A549 (cell line): ENCODE measurements at regions of chr7 and their contacts with region 1.

Region 1: DNA sequence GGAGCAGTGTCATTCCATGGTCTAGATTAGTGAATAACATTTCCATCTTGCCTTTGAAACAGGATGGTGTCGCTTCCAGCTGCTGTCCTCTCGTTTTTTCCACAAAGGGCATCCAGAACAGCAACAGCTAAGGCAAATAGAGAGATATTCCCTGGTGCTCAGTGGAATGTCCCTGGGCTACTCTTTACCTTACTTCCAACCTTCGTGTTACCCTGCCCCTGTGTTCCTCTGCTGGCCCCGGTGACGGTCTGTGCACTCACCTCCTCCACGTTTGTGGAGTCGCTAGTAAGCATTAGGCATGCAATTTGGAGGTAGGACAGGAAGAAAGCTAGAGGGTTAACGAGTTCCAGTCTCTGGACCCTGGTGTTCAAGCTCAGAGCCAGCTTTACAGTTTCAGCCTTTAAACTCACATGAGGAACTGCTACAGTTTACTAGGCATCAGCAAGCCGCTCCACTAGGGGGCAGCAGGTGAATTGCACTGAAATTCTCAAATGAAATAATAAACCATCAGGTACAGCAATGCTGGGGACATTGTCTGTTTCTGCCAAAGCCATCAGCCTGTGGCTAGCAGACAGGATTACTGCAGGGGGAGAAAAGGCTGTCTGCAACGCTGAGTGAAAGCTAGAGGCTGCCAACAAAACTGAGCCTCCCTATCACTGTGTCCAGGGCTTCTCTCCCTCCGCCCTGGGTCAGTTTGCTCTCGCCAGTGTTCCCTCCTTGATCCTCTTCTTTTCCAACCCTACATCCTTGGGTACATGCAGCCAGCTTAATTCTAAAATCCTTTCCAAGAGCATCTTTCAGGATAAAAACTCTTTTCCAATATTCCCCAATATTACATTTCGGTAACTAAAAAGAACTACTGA is 9.0 kb downstream of the MRPL32 start:
- DNase-seq: peak; percentile 69 to 70
- ATAC-seq: peak; percentile 88 to 93
- H3K4me3 ChIP-seq: no peak overlapping the region
- H3K27ac ChIP-seq: no peak overlapping the region
- H3K4me1 ChIP-seq: no peaks in the 10 kb centered on the region
- CTCF ChIP-seq: peak; percentile 94
- EP300 ChIP-seq: no peak
- POLR2A ChIP-seq: no peak
- RAD21 ChIP-seq: peak; percentile 89 to 91

Region 2: DNA sequence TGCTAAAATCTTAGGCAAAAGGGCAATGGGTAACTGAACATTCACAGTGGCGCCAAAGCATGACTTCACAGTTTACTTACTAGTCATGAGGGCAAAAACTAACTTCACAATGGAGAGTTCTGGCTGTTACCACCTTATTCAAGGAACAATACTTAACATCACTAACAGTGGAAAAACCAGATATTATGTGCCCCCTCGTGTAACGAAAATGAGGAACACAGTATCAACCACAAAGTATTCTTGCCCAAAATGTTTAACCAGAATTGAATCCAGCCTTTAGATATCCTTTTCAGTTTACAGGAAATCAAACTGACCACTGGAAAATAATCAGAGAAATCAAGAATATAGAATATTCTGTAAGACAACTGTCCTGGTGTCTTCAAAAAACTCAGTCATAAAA is 38.9 kb before region 1 on chr7:
- CTCF ChIA-PET with region 1: no interaction called
- POLR2A ChIA-PET with region 1: no interaction called
- DNase-seq: no peak
- ATAC-seq: no peak
- H3K4me3 ChIP-seq: no peak overlapping the region
- H3K27ac ChIP-seq: no peak overlapping the region
- H3K4me1 ChIP-seq: no peaks in the 10 kb centered on the region
- CTCF ChIP-seq: no peak
- EP300 ChIP-seq: no peak
- POLR2A ChIP-seq: no peak
- RAD21 ChIP-seq: no peak

Region 3: DNA sequence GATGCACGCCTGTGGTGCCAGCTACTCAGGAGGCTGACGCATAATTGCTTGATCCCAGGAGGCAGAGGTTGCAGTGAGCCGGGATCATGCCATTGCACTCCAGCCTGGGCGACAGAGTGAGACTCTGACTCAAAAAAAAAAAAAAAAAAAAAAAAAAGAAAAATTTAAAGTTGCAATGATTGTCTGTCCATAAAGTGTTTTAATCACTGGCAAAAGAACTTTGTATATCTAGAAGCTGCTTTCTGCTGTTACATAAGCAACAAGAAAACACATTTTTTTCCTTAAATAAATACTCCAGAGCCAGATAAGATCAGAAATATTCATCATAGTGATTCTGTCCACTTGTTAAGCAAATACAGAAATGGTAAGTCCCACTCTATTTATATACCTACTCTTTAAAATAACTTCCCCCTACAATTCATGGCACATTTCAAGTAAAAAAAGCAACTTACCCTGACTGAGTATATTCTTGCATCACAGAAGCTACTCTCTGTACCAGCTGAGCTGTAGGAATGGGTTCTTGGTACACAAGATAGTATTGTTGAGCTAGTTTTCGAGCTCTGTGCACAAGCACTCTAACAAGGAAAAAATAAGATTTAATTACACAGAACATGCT is 16.9 kb before region 1 on chr7:
- CTCF ChIA-PET with region 1: interaction called, 53 read pairs
- POLR2A ChIA-PET with region 1: no interaction called
- DNase-seq: no peak
- ATAC-seq: no peak
- H3K4me3 ChIP-seq: no peak overlapping the region
- H3K27ac ChIP-seq: no peak overlapping the region
- H3K4me1 ChIP-seq: peaks cover under 1% of the 10 kb centered on the region; the same call in 1 of the 3 replicates
- CTCF ChIP-seq: no peak
- EP300 ChIP-seq: no peak
- POLR2A ChIP-seq: no peak
- RAD21 ChIP-seq: no peak

Region 4: GRCh38 chr7:42964849-42965805 is 23.9 kb after region 1 on chr7:
- CTCF ChIA-PET with region 1: interaction called, 13 read pairs
- POLR2A ChIA-PET with region 1: no interaction called
- DNase-seq: no peak
- ATAC-seq: no peak
- H3K4me3 ChIP-seq: no peak overlapping the region
- H3K27ac ChIP-seq: no peak overlapping the region
- H3K4me1 ChIP-seq: no peaks in the 10 kb centered on the region
- CTCF ChIP-seq: no peak
- EP300 ChIP-seq: no peak
- POLR2A ChIP-seq: no peak
- RAD21 ChIP-seq: no peak

Region 5: GRCh38 chr7:43108255-43109011 is 167.2 kb after region 1 on chr7:
- CTCF ChIA-PET with region 1: interaction called, 13 read pairs
- POLR2A ChIA-PET with region 1: no interaction called
- DNase-seq: peak; percentile 58
- ATAC-seq: peak; percentile 88 to 95
- H3K4me3 ChIP-seq: no peak overlapping the region
- H3K27ac ChIP-seq: no peak overlapping the region
- H3K4me1 ChIP-seq: peaks cover 11% of the 10 kb centered on the region; the same call in 1 of the 3 replicates
- CTCF ChIP-seq: peak; percentile 61
- EP300 ChIP-seq: no peak
- POLR2A ChIP-seq: no peak
- RAD21 ChIP-seq: peak; percentile 55 to 65; a peak in 4 of 5 replicates

Region 6: DNA sequence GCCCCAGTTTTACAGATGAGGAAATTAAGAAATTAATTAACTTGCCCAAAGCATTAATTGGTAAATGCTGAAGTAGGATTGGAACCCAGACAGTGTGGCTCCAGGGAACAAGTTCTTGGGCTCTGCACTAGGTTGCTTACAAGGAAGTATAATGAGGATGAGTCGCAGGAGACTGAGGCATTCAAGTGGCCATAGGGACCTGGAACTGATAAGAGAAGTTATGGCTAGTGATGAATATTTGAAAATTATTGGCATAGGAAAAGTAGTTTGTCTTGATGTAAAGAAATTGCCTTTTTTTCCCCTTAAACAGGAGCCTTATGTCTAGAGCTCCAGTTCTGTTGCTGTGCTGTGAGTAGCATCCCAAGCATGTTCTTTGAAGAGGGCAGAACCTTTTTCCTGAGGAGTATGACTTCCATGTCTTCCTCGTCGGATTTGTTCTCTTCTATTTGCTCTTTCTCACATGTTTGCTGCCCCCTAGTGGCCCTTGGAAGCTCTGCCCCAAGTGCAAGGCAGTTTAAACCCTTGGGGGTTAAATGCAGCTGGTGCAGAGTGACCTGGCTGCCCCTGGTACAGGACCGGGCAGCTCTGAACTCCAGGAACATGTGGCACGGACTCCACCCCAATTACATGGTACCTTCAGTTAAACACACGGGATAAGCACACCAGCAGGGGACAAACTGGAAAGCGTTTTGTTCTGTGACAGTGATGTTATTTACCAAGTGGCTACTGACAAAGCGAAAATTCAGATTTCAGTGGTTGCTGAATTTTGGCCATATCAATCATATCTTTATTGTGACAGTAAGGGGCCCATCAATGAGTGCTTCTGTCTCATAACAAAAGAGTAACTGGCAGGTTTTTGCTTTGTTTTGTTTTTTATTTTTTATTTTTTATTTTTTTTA is 320.0 kb after region 1 on chr7:
- CTCF ChIA-PET with region 1: interaction called, 36 read pairs
- POLR2A ChIA-PET with region 1: no interaction called
- DNase-seq: peak; percentile 51 to 89
- ATAC-seq: peak; percentile 93 to 98
- H3K4me3 ChIP-seq: no peak overlapping the region
- H3K27ac ChIP-seq: no peak overlapping the region
- H3K4me1 ChIP-seq: no peaks in the 10 kb centered on the region
- CTCF ChIP-seq: peak; percentile 84
- EP300 ChIP-seq: no peak
- POLR2A ChIP-seq: no peak
- RAD21 ChIP-seq: peak; percentile 84 to 90

Region 7: DNA sequence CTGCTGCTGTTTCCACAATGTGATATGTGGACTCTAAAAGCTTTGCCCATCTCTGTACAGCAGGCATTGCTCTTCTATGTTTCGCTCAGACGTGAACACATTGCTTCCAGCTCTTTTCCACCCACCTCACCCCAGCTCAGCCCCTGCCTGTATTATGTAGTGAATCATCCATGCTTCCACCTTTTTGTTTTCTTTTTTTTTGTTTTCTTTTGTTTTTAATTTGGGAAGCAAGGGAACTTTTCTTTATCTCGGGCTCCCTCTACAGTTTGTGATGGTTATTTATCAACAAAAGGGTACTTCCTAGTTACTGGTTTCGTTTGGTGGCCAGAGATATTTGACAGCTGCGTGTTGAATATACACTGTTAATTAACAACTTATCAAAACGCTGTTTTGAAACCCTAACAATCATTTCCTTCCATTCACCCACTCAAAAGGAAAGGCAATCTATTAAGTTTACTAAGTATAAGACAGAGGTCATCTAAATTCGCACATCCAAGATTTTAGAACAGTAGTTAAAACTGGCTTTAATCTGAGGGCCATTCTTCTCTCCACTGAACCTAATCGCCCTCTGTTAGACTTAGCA is 513.8 kb after region 1 on chr7:
- CTCF ChIA-PET with region 1: interaction called, 21 read pairs
- POLR2A ChIA-PET with region 1: no interaction called
- DNase-seq: peak; percentile 22 to 38
- ATAC-seq: peak; percentile 56 to 63; a peak in 4 of 6 replicates
- H3K4me3 ChIP-seq: no peak overlapping the region
- H3K27ac ChIP-seq: no peak overlapping the region
- H3K4me1 ChIP-seq: no peaks in the 10 kb centered on the region
- CTCF ChIP-seq: peak; percentile 59
- EP300 ChIP-seq: no peak
- POLR2A ChIP-seq: no peak
- RAD21 ChIP-seq: peak; percentile 62 to 70

Region 8: GRCh38 chr7:43735802-43736541 is 794.8 kb after region 1 on chr7:
- CTCF ChIA-PET with region 1: no interaction called
- POLR2A ChIA-PET with region 1: no interaction called
- DNase-seq: no peak
- ATAC-seq: no peak
- H3K4me3 ChIP-seq: no peak overlapping the region
- H3K27ac ChIP-seq: peak overlapping the region; percentile 33 to 55; a peak in 1 of 6 replicates
- H3K4me1 ChIP-seq: peaks cover 8% of the 10 kb centered on the region; the same call in 2 of the 3 replicates
- CTCF ChIP-seq: no peak
- EP300 ChIP-seq: no peak
- POLR2A ChIP-seq: no peak
- RAD21 ChIP-seq: no peak